ENCODE measurements at regions of chr6 and their contacts with region 1.

Region 1: GRCh38 chr6:40719671-40720374 is 132.7 kb upstream of the LRFN2 start:
- DNase-seq: peak in 2 of 5 donors; percentile 12 to 29
- H3K4me3 ChIP-seq: no peak overlapping the region
- H3K27ac ChIP-seq: peak overlapping the region; percentile 25 to 72
- H3K4me1 ChIP-seq: no peaks in the 10 kb centered on the region
- H3K27me3 ChIP-seq: no peaks in the 10 kb centered on the region
- CTCF ChIP-seq: no peak
- EP300 ChIP-seq: no peak
- POLR2A ChIP-seq: no peak

Region 2: GRCh38 chr6:41840326-41840725 is 1120.5 kb after region 1 on chr6:
- intact Hi-C with region 1: loop called in 1 of 4 experiments (anchors 5 kb)
- DNase-seq: no peak
- H3K4me3 ChIP-seq: no peak overlapping the region
- H3K27ac ChIP-seq: no peak overlapping the region
- H3K4me1 ChIP-seq: no peaks in the 10 kb centered on the region
- H3K27me3 ChIP-seq: no peaks in the 10 kb centered on the region
- CTCF ChIP-seq: no peak
- EP300 ChIP-seq: no peak
- POLR2A ChIP-seq: no peak

Measured in ovary (tissue), 10 donors.